AG04450 (cell line): ENCODE measurements at regions of chr11 and their contacts with region 1.

Region 1: DNA sequence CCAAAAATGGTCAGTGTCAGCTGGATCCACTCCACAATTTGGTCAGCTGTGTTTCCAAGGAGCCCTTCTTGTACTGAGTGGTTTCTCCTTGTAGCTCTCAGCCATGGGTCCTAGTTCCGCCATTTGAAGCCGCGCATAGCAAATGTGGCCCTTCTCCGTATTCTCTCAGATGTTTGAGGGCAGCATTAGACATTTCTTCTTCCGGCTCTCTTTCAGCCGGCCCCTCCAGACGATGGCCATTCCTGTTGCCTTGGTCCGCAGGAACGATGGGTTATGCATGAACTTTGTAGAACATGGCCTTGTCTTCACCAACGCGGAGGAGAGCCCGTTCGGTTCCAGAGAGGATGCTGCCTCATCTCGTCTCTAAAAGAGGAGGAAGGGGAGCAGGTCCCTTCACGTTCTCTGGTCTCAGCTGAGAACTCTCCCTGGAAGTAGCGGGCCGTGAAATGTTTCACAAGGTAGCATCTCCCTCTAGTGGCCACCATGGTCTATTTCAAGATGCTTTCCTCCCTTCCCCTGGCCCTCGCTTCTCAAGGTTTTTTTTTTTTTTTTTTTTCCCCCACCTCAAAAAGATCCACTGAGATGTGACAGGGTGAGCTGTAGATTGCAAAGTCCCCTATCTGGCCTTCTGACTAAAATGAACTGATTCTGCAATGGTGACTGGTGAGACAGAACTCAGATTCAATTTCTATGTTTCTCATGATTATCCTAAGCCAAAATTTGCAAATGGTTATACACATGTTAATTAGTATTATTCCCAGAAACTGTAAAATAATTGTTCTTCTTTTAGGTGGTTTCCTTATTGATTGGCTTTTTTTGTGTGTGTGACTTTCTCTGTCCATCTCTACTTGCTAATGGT is 19.8 kb upstream of the PLET1 start:
- DNase-seq: peak; percentile 63
- H3K4me3 ChIP-seq: peak overlapping the region; percentile 55
- H3K27ac ChIP-seq: no peak overlapping the region
- H3K27me3 ChIP-seq: peaks cover 16% of the 10 kb centered on the region
- CTCF ChIP-seq: peak; percentile 81

Region 2: DNA sequence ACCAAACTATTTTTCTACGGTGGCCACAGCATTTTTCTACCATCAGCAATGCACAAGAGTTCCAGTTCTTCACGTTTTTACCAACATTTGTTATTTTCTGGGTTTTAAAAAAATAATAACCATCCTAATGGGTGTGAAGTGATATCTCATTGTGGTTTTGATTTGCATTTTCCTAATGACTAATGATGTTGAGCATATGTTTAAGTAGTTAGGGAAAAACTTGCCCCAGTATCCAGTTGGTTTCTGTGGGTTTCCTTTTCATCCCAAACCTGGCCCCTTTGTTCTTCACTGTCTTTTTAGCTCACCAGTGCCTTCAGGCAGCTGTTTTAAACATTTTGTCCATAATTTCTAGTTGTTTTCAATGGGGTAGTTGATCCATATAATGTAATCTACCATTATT is 69.0 kb before region 1 on chr11:
- CTCF ChIA-PET with region 1: interaction called, 711 read pairs
- POLR2A ChIA-PET with region 1: no interaction called
- DNase-seq: no peak
- H3K4me3 ChIP-seq: no peak overlapping the region
- H3K27ac ChIP-seq: no peak overlapping the region
- H3K27me3 ChIP-seq: no peaks in the 10 kb centered on the region
- CTCF ChIP-seq: no peak

Region 3: GRCh38 chr11:112241486-112241885 is 39.0 kb before region 1 on chr11:
- CTCF ChIA-PET with region 1: interaction called, 13 read pairs
- POLR2A ChIA-PET with region 1: no interaction called
- DNase-seq: peak; percentile 64
- H3K4me3 ChIP-seq: no peak overlapping the region
- H3K27ac ChIP-seq: peak overlapping the region; percentile 21
- H3K27me3 ChIP-seq: no peaks in the 10 kb centered on the region
- CTCF ChIP-seq: no peak

Region 4: DNA sequence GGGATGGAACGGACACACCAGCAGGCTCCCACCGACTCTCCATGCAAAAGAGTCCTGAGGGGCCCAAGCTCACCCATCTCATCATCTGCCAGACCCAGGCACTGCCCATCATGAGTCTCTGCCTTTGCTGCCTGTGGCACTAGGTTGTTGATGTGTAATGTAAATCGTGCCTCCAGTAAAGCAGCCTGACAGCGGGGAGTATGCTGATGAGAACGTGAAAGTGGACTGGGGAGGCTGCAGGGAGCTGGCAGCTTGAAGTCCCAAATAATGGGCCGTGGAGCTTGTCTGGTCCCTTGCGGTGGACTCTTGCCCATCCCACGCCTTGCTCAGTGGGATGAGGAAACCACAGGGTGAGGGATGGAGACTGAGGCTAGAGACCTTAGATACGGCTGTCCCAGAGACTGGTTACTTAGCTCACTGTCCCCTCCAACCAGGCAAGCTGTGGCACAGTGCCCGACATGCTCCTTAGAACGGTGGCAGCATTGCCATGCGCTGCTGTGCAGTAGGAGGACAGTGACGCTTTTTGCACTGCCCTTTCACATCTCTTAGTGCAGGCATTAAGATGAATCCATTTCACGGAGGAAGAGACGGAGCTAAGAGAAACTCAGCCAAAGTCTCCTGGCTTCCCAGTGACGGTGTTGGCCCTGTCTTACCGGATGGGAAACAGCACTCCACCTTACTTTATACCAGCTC is 19.7 kb after region 1 on chr11:
- CTCF ChIA-PET with region 1: interaction called, 10 read pairs
- POLR2A ChIA-PET with region 1: no interaction called
- DNase-seq: no peak
- H3K4me3 ChIP-seq: no peak overlapping the region
- H3K27ac ChIP-seq: no peak overlapping the region
- H3K27me3 ChIP-seq: no peaks in the 10 kb centered on the region
- CTCF ChIP-seq: no peak

Region 5: GRCh38 chr11:112537846-112538330 is 257.4 kb after region 1 on chr11:
- CTCF ChIA-PET with region 1: interaction called, 14 read pairs
- POLR2A ChIA-PET with region 1: no interaction called
- DNase-seq: no peak
- H3K4me3 ChIP-seq: no peak overlapping the region
- H3K27ac ChIP-seq: no peak overlapping the region
- H3K27me3 ChIP-seq: peaks cover 5% of the 10 kb centered on the region
- CTCF ChIP-seq: no peak

Region 6: GRCh38 chr11:113234888-113235287 is 954.4 kb after region 1 on chr11:
- CTCF ChIA-PET with region 1: interaction called, 11 read pairs
- POLR2A ChIA-PET with region 1: no interaction called
- DNase-seq: no peak
- H3K4me3 ChIP-seq: no peak overlapping the region
- H3K27ac ChIP-seq: no peak overlapping the region
- H3K27me3 ChIP-seq: no peaks in the 10 kb centered on the region
- CTCF ChIP-seq: no peak